Transverse colon (tissue), 4 donors: ENCODE measurements at regions of chr16 and their contacts with region 1.

Region 1: GRCh38 chr16:84672276-84673202 is 24.2 kb downstream of the KLHL36 start:
- DNase-seq: peak; percentile 83
- H3K4me3 ChIP-seq: no peak overlapping the region
- H3K27ac ChIP-seq: no peak overlapping the region
- H3K4me1 ChIP-seq: peaks cover 0 to 3% (median 0%) of the 10 kb centered on the region in 4 donors
- H3K27me3 ChIP-seq: no peaks in the 10 kb centered on the region
- CTCF ChIP-seq: peak; percentile 90 to 96 (median 94)
- EP300 ChIP-seq: no peak
- POLR2A ChIP-seq: no peak

Region 2: DNA sequence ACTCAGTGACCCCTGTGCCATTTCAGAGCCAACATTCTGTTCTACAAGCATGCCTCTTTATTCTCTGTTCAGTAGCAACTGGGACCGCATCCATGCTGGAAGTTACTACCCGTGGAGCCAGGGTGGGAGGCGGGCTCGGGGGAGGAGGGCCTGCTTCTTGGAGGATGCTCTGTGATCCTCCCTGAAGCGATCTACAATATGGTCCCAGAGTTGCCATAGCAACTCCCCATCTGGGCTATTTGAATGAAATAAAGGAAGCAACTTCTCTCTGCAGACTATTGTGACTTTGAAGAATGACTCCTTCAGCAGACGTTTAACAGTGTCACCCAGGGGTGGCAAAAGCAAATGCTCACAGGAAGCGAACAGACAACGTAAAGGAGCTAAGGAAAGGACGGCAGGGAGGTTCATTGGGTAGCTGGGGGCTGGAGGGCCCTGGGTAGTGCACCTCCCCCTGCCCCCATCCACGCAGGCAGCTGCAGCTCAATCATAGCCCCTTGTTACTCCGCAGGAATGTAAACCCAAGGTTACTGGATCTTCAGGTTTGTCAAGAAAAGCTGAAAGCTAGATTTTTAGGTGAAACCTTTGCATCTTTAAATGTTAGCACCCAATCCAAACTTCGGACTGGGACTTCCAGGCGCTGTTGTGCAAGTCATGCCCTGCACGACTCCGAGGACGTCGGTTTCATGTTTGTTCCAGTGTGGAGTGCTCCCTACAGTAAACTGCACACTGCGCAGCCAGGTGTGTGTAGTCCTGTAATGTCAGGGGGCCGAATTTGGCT is 116.9 kb before region 1 on chr16:
- in situ Hi-C with region 1: no loop called
- intact Hi-C with region 1: no loop called
- DNase-seq: no peak
- H3K4me3 ChIP-seq: no peak overlapping the region
- H3K27ac ChIP-seq: no peak overlapping the region
- H3K4me1 ChIP-seq: peaks cover 0 to 18% (median 9%) of the 10 kb centered on the region in 4 donors
- H3K27me3 ChIP-seq: no peaks in the 10 kb centered on the region
- CTCF ChIP-seq: no peak
- EP300 ChIP-seq: no peak
- POLR2A ChIP-seq: no peak

Region 3: DNA sequence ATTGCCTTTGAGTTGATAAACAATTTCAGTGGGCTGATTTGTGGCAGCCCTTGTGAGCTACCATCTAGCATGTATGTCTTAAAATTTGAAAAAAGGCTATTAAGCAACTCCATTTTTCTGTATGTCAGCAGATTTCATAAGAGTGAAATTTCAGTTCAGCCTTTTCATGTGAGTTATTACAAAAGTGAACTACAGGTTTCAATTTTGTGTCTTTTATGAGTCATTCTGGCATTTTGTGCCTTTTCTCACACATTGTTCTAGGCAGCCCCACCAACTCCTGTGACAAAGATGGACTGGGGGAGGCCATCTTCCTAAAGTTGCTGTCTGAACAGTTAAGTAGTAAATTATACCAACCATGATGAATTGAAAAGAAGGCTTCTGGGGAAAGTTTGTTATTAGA is 79.4 kb after region 1 on chr16:
- in situ Hi-C with region 1: no loop called
- intact Hi-C with region 1: no loop called
- DNase-seq: no peak
- H3K4me3 ChIP-seq: no peak overlapping the region
- H3K27ac ChIP-seq: peak overlapping the region in 2 of 4 donors; percentile 2 to 55
- H3K4me1 ChIP-seq: peaks cover 6 to 46% (median 22%) of the 10 kb centered on the region in 4 donors
- H3K27me3 ChIP-seq: no peaks in the 10 kb centered on the region
- CTCF ChIP-seq: no peak
- EP300 ChIP-seq: no peak
- POLR2A ChIP-seq: no peak

Region 4: GRCh38 chr16:84832488-84833143 is 160.1 kb after region 1 on chr16:
- in situ Hi-C with region 1: no loop called
- intact Hi-C with region 1: no loop called
- DNase-seq: peak; percentile 78
- H3K4me3 ChIP-seq: no peak overlapping the region
- H3K27ac ChIP-seq: peak overlapping the region; percentile 83 to 97 (median 92)
- H3K4me1 ChIP-seq: peaks cover 43 to 85% (median 68%) of the 10 kb centered on the region in 4 donors
- H3K27me3 ChIP-seq: no peaks in the 10 kb centered on the region
- CTCF ChIP-seq: no peak
- EP300 ChIP-seq: peak; percentile 100
- POLR2A ChIP-seq: peak; percentile 28

Region 5: GRCh38 chr16:84970447-84971127 is 298.0 kb after region 1 on chr16:
- in situ Hi-C with region 1: no loop called
- intact Hi-C with region 1: loop called (anchors 10 kb)
- DNase-seq: peak; percentile 82
- H3K4me3 ChIP-seq: no peak overlapping the region
- H3K27ac ChIP-seq: no peak overlapping the region
- H3K4me1 ChIP-seq: peaks cover 0 to 10% (median 7%) of the 10 kb centered on the region in 4 donors
- H3K27me3 ChIP-seq: no peaks in the 10 kb centered on the region
- CTCF ChIP-seq: peak; percentile 95 to 98 (median 96)
- EP300 ChIP-seq: no peak
- POLR2A ChIP-seq: no peak